AG04449 (cell line): ENCODE measurements at regions of chr5 and their contacts with region 1.

Region 1: GRCh38 chr5:72991394-72991793 is 35.6 kb downstream of the FCHO2 start:
- DNase-seq: no peak
- H3K4me3 ChIP-seq: no peak overlapping the region
- CTCF ChIP-seq: no peak

Region 2: GRCh38 chr5:72955768-72956323 is 35.5 kb before region 1 on chr5 and contains the start of gene FCHO2:
- CTCF ChIA-PET with region 1: interaction called, 13 read pairs
- POLR2A ChIA-PET with region 1: no interaction called
- DNase-seq: peak; percentile 65
- H3K4me3 ChIP-seq: peak within 1 kb of the TSS; percentile 70
- CTCF ChIP-seq: peak; percentile 95